ENCODE measurements at regions of chr3 and their contacts with region 1.

Region 1: GRCh38 chr3:66302288-66302687 is 81.5 kb downstream of the SLC25A26 start:
- DNase-seq: peak; percentile 62
- H3K4me3 Mint-ChIP-seq: no peak overlapping the region
- H3K27ac Mint-ChIP-seq: peak overlapping the region; percentile 96
- H3K4me1 Mint-ChIP-seq: peaks cover 74% of the 10 kb centered on the region
- H3K27me3 Mint-ChIP-seq: no peaks in the 10 kb centered on the region

Region 2: DNA sequence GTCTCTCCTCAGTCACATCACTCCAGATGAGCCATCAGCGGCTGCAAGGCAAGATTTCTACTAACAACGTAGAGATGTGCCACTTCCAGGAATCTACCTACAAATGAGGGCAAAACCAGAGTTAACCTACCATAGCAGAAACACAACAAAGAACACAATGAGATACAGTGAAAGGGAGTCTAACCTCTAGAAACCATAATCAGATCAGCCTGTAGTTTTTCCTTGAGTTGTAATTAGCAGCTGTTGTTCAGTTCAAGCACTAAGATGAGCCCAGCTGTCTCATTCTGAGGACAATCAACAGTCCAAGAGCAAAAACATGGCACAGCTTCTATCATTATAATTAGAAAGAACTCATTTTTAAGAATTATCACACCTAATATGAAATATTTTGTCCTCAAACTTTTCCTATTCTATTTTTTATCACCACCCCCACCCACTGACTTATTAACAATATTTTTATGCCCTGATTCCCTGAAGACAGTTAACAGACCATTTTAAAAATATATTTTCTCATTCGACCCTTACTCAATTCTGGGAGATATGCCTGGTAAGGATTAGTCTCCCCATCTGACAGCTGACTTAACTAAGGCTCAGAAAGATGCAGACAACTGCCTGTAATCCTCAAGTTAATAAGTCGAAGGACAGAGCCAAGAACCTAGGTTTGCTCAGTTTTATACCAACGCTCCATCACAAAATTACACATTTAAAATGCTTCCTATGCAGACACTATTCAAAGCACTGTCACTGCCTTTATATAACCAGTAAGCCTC is 313.7 kb before region 1 on chr3:
- CTCF ChIA-PET with region 1: no interaction called
- POLR2A ChIA-PET with region 1: no interaction called
- DNase-seq: no peak
- H3K4me3 Mint-ChIP-seq: no peak overlapping the region
- H3K27ac Mint-ChIP-seq: no peak overlapping the region
- H3K4me1 Mint-ChIP-seq: no peaks in the 10 kb centered on the region
- H3K27me3 Mint-ChIP-seq: no peaks in the 10 kb centered on the region

Region 3: GRCh38 chr3:66276705-66277274 is 25.5 kb before region 1 on chr3:
- CTCF ChIA-PET with region 1: interaction called, 5 read pairs
- POLR2A ChIA-PET with region 1: interaction called, 12 read pairs
- DNase-seq: peak; percentile 72
- H3K4me3 Mint-ChIP-seq: no peak overlapping the region
- H3K27ac Mint-ChIP-seq: no peak overlapping the region
- H3K4me1 Mint-ChIP-seq: peaks cover 25% of the 10 kb centered on the region
- H3K27me3 Mint-ChIP-seq: no peaks in the 10 kb centered on the region

Region 4: DNA sequence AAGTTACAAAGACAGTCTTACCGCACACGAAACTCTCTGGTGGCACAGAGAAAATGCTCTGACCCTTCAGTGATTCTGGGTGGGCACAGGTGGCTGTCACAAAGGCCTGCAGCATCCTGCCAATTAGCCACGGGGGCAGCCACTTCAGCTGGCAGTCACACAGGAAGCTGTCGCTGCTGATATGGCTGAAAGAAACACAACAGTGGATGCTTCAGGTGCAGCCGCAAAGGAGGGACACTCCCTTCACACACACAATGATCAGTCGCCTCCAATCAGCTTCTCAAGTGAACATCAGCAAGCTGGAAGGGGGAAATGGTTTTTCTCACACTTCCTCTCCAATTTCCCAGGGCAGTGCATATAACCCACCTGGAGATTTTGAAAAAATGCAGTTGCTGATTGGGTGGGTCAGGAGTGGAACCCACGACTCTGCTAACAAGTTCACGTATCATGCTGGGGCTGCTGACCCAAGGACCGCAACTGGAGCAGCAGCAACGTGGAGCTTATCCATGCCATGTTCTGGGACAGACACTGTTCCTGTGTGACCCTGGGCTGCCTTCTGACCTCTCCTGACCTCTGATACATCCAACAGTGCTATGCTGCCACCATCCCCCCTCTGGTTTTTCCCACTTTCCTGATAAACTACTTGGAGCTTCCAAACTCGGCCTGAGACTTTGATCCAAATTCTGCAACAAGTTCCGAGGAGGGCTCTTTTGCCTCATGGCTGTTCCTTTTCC is 91.9 kb after region 1 on chr3:
- CTCF ChIA-PET with region 1: interaction called, 5 read pairs
- POLR2A ChIA-PET with region 1: interaction called, 13 read pairs
- DNase-seq: peak; percentile 73
- H3K4me3 Mint-ChIP-seq: peak overlapping the region; percentile 75
- H3K27ac Mint-ChIP-seq: peak overlapping the region; percentile 97
- H3K4me1 Mint-ChIP-seq: peaks cover 40% of the 10 kb centered on the region
- H3K27me3 Mint-ChIP-seq: no peaks in the 10 kb centered on the region

Region 5: DNA sequence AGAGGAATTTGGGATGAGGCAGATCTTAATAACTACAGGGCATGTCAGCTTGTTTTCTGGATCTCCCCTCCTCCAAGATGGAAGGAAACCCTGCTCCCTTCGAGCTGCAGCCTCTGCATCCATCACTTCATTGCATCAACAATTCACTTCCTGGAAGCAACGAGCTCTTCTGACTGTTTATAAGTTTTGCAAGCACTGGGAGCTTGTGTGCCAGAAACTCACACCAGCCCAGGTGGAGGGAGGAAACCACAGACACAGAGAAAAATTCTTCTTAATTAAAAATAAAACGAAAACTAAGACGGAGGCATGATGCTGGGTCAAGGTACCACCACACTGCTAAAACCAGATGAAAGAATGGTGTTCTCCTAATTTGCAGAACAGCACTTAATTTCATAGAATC is 187.9 kb after region 1 on chr3:
- CTCF ChIA-PET with region 1: interaction called, 3 read pairs
- POLR2A ChIA-PET with region 1: interaction called, 14 read pairs
- DNase-seq: peak; percentile 56
- H3K4me3 Mint-ChIP-seq: peak overlapping the region; percentile 61
- H3K27ac Mint-ChIP-seq: peak overlapping the region; percentile 83
- H3K4me1 Mint-ChIP-seq: peaks cover 89% of the 10 kb centered on the region
- H3K27me3 Mint-ChIP-seq: no peaks in the 10 kb centered on the region

Region 6: DNA sequence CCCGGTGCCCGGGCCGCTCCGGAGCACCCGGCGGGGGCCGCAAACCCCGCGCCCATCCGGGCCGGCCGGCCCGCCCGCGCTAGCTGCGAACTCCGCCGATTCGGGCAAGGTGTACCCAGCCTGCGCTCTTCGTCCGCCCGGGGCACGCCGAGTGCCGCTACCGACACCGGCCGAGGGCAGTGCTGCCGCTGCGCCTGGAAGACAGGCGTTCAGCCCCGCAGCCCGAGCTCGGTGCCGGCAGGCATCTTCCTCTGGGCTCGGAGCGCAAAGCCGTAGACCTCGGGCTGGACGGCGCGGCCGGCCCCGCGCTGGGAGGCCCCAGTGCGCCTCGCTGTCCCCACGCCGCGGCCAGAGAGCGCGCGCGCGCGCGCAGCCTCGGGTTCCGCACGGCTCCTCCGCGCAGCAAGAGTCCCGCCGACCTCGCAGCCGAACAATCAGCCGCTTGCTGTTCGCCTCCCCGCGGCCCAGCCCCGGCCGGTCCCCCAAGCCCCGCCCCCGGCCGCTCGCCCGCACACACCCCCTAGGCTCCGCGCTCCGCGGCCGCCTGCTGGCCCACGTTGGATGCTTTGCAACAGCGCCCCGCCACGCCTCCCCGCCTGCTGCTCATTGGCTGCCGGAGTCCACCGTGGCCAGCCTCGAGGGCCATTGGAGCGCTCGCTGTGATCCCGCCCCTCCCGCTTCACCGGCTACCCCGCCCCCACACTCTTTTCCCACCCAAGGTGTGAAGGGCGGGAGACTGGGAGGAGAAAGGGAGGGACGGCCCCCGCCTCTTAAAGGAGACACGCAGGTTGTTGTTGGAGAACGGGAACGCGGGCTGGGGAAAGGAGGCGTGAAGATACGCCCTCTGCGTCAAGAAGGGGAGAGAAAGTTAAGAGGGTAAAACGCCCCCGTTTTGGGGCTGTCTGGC is 198.5 kb after region 1 on chr3 and contains the start of gene LRIG1:
- CTCF ChIA-PET with region 1: no interaction called
- POLR2A ChIA-PET with region 1: interaction called, 13 read pairs
- DNase-seq: peak; percentile 99
- H3K4me3 Mint-ChIP-seq: peak within 1 kb of the TSS; percentile 88
- H3K27ac Mint-ChIP-seq: peak within 1 kb of the TSS; percentile 73
- H3K4me1 Mint-ChIP-seq: peaks cover 64% of the 10 kb centered on the region
- H3K27me3 Mint-ChIP-seq: peaks cover 7% of the 10 kb centered on the region
- total RNA-seq, gene LRIG1: 43.0 to 43.7 TPM